Ovary (tissue), 10 donors: ENCODE measurements at regions of chr17 and their contacts with region 1.

Region 1: GRCh38 chr17:82559566-82560251 is 40.2 kb downstream of the FOXK2 start:
- DNase-seq: no peak
- H3K4me3 ChIP-seq: no peak overlapping the region
- H3K27ac ChIP-seq: no peak overlapping the region
- H3K4me1 ChIP-seq: peaks cover 8% of the 10 kb centered on the region
- H3K27me3 ChIP-seq: no peaks in the 10 kb centered on the region
- CTCF ChIP-seq: no peak
- EP300 ChIP-seq: no peak
- POLR2A ChIP-seq: no peak

Region 2: GRCh38 chr17:80789356-80789902 is 1770.3 kb before region 1 on chr17:
- intact Hi-C with region 1: loop called in 1 of 4 experiments (anchors 5 kb)
- DNase-seq: peak in 2 of 5 donors; percentile 36 to 43
- H3K4me3 ChIP-seq: no peak overlapping the region
- H3K27ac ChIP-seq: no peak overlapping the region
- H3K4me1 ChIP-seq: peaks cover 16% of the 10 kb centered on the region
- H3K27me3 ChIP-seq: no peaks in the 10 kb centered on the region
- CTCF ChIP-seq: no peak
- EP300 ChIP-seq: no peak
- POLR2A ChIP-seq: no peak

Region 3: DNA sequence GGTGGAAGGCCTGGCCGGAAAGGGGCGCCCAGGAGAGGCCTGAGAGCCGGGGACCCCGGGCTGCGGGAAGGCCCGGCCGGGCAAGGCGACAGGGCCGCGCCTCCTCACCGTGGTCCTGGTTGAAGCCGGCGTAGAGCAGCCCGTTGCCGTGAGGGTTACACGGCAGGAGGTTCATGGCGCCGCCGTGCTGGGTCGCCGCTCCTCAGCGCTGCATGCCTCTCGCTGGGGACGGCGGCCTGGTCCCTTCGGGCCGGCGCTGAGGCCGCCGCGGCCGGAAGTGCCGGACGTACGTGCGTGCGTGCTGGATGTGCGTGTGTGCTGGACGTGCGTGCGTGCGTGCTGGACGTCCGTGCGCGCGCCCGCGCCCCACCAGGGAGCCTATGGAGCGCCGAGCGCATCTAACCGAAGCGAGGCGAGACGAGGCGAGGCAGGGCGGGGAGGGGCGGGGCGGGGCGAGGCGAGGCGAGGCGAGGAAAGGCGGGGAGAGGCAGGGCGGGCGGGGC is 88.5 kb after region 1 on chr17 and contains the start of gene WDR45B:
- intact Hi-C with region 1: no loop called
- DNase-seq: peak; percentile 94 to 98 (median 95)
- H3K4me3 ChIP-seq: peak within 1 kb of the TSS; percentile 92
- H3K27ac ChIP-seq: peak within 1 kb of the TSS; percentile 99 to 100
- H3K4me1 ChIP-seq: peaks cover 2% of the 10 kb centered on the region
- H3K27me3 ChIP-seq: no peaks in the 10 kb centered on the region
- CTCF ChIP-seq: no peak
- EP300 ChIP-seq: peak; percentile 84
- POLR2A ChIP-seq: peak; percentile 96
- total RNA-seq, gene WDR45B: 43.0 to 99.3 (median 83.5) TPM